Naive thymus-derived CD4-positive, alpha-beta T cell (primary cell): ENCODE measurements at regions of chr1 and their contacts with region 1.

Region 1: DNA sequence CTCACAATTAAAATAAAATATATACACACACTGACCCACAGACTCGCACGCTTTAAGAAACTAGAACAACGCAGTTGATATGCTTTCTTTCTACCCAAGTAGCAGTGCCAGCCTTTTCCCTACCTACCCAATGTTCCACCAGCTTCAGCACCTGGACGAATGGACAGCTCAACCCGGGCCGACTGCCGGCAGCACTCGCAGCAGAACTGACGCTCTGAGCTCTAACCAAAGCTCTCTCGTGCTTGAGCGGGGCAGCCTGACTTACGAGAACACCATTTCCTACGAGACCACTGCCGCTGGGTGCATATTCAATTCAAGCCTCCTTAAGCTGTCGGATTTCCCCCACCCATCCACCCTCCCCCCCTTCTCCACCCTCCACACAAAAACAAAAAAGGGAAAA is 127.4 kb upstream of the DPYD start:
- DNase-seq: peak; percentile 38 to 75 (median 69)
- ATAC-seq: peak; percentile 88
- H3K4me3 ChIP-seq: no peak overlapping the region
- H3K4me3 Mint-ChIP-seq: peak overlapping the region in 9 of 10 donors; percentile 5 to 54 (median 38)
- H3K27ac ChIP-seq: no peak overlapping the region
- H3K27ac Mint-ChIP-seq: peak overlapping the region in 3 of 9 donors; percentile 6 to 43 (median 6)
- H3K4me1 ChIP-seq: peaks cover 6 to 20% of the 10 kb centered on the region in 2 donors
- H3K4me1 Mint-ChIP-seq: peaks cover 20 to 49% (median 45%) of the 10 kb centered on the region in 7 donors
- H3K27me3 ChIP-seq: peaks cover 25 to 46% of the 10 kb centered on the region in 2 donors
- H3K27me3 Mint-ChIP-seq: peaks cover 84 to 93% (median 87%) of the 10 kb centered on the region in 5 donors

Region 2: GRCh38 chr1:97243973-97244560 is 804.2 kb before region 1 on chr1:
- CTCF ChIA-PET with region 1: no interaction called
- POLR2A ChIA-PET with region 1: no interaction called
- intact Hi-C with region 1: loop called (anchors 2 kb)
- DNase-seq: no peak
- ATAC-seq: no peak
- H3K4me3 ChIP-seq: no peak overlapping the region
- H3K4me3 Mint-ChIP-seq: no peak overlapping the region
- H3K27ac ChIP-seq: no peak overlapping the region
- H3K27ac Mint-ChIP-seq: peak overlapping the region in 1 of 9 donors; percentile 25
- H3K4me1 ChIP-seq: no peaks in the 10 kb centered on the region
- H3K4me1 Mint-ChIP-seq: no peaks in the 10 kb centered on the region
- H3K27me3 ChIP-seq: no peaks in the 10 kb centered on the region
- H3K27me3 Mint-ChIP-seq: no peaks in the 10 kb centered on the region

Region 3: GRCh38 chr1:97593192-97593591 is 455.1 kb before region 1 on chr1:
- CTCF ChIA-PET with region 1: no interaction called
- POLR2A ChIA-PET with region 1: no interaction called
- intact Hi-C with region 1: loop called in 1 of 2 experiments (anchors 10 kb)
- DNase-seq: no peak
- ATAC-seq: no peak
- H3K4me3 ChIP-seq: no peak overlapping the region
- H3K4me3 Mint-ChIP-seq: no peak overlapping the region
- H3K27ac ChIP-seq: no peak overlapping the region
- H3K27ac Mint-ChIP-seq: no peak overlapping the region
- H3K4me1 ChIP-seq: no peaks in the 10 kb centered on the region
- H3K4me1 Mint-ChIP-seq: no peaks in the 10 kb centered on the region
- H3K27me3 ChIP-seq: no peaks in the 10 kb centered on the region
- H3K27me3 Mint-ChIP-seq: no peaks in the 10 kb centered on the region